Endothelial cell of umbilical vein (primary cell): ENCODE measurements at regions of chr1 and their contacts with region 1.

Region 1: DNA sequence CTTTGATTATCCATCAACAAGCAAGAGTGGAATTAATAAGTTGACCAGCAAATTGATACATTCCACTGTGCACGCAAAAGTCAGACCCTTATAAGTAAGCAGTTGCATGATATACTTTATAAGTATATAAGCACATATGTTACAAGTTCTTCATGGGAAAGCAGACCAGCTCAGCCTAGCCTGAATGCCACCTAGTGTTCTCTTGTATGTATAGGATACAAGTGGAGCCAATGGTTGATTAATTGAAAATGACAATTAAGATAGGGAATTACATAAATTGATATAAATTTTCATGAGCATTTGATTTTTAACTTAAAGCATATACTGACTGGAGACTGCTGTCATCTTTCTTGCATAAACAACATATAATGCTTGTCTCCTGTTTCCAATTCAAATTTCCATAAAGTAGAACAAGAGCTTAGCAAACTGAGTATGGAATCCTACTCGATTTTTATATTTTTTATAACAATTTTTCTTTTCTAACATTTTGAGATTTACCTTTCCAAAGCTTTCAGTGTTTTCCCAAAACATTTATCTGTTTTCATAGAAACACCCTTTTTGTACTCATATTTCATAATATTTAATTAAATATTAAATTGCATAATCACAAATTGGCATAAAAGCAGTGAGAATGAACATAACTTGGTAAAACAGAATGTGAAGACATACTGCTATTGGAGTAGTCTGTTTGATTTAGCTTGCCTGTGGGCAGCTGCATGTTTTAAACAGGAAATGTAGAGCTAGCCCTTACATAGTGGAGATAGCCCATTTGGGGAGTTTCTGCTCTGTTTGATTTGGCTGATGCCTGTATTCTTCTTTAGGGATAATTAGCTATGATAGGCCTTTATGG is 62.8 kb downstream of the MAGI3 start:
- DNase-seq: peak; percentile 60
- H3K4me3 ChIP-seq: no peak overlapping the region
- H3K27ac ChIP-seq: no peak overlapping the region
- H3K4me1 ChIP-seq: peaks cover 30% of the 10 kb centered on the region
- H3K27me3 ChIP-seq: no peaks in the 10 kb centered on the region
- CTCF ChIP-seq: peak; percentile 19 to 44
- POLR2A ChIP-seq: no peak

Region 2: DNA sequence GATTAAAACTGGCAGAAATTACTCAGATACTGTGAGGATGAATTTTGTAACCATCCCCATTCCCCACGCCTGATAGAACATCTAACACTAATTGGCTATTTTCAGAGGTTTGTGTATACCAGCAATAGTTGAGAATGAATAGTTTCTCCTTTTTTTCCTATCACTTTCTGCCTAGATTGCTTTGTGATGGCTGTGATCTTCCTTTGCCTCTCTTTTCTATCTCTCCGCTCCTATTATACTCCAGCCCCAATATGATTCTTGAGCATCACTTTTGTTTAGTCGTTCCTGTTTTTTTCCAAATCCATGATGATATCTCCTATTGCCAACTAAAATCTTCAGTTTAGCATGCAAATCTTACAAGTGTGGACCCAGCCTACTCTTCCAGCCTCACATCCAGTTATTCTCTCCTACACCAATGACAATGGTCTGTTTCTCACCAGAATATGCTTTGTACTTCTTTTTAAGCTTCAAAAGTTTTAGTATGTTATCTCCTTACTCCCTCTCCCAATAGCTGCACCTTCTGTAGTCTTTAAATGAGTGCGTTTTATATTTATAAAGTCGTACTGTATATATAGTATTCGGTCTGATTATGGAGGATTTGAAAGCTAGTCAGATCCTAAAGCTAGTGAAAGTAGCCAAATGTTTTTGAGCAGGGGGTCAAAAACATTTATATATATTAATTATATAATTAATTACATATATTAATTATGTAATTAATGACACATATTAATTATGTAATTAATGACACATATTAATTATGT is 37.7 kb before region 1 on chr1:
- CTCF ChIA-PET with region 1: interaction called, 6 read pairs
- POLR2A ChIA-PET with region 1: no interaction called
- dilution Hi-C with region 1: no loop called
- intact Hi-C with region 1: loop called (anchors 1 kb)
- DNase-seq: no peak
- H3K4me3 ChIP-seq: no peak overlapping the region
- H3K27ac ChIP-seq: no peak overlapping the region
- H3K4me1 ChIP-seq: no peaks in the 10 kb centered on the region
- H3K27me3 ChIP-seq: no peaks in the 10 kb centered on the region
- CTCF ChIP-seq: no peak
- POLR2A ChIP-seq: no peak

Region 3: DNA sequence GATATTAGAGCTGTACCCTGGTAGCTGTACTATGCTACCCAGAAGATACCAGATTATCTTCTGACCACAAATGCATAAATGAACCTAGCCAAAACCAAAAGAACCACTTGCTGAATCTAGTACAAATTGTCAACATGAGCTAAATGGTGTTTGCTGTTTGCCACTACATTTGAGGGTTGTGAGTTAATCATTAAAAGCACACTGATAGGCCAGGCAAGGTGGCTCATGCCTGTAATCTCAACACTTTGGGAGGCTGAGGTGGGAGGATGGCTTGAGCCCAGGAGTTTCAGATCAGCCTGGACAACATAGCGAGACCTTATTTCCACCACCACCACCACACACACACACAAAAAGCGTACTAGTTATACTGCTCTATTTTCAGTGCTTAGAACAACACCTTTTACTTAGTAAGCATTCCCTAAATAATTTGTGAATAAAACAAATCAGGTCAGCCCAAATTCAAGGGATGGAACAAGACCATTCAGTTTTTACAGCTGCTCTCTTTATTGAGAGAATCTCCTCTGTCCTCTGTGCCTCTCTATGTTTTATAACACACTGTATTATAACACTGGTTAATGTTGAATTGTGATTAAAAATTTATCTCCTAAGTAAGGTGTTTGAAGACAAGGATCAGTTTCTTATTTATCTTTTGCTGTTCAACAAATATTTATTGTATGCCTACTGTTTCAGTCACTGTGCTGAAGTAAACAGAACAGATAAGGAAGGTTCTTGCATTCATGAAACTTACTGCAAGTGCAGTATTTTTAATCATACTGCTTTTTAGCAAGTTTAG is 18.9 kb before region 1 on chr1:
- CTCF ChIA-PET with region 1: interaction called, 21 read pairs
- POLR2A ChIA-PET with region 1: no interaction called
- dilution Hi-C with region 1: no loop called
- intact Hi-C with region 1: no loop called
- DNase-seq: no peak
- H3K4me3 ChIP-seq: no peak overlapping the region
- H3K27ac ChIP-seq: no peak overlapping the region
- H3K4me1 ChIP-seq: no peaks in the 10 kb centered on the region
- H3K27me3 ChIP-seq: no peaks in the 10 kb centered on the region
- CTCF ChIP-seq: no peak
- POLR2A ChIP-seq: no peak

Region 4: DNA sequence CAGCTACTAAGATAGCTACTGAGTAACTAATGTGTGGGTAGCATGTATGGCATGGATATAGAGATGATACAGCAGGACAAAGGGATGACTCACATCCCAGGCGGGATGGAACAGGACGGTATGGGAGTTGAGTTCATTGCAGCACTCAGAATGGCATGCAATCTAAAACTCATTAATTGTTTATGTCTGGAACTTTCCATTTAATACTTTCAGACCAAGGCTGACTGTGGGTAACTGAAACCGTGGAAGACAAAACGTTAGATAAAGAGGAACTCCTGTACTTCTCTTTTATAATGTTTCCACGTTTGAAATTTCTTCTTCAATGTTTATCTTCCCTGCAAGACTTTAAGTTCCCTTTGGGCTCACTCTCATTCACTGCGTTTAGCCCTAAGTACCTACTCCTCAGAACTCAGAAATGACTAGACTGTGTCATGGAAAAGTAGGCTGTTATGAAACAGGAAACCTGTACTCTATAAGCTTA is 89.1 kb after region 1 on chr1:
- CTCF ChIA-PET with region 1: no interaction called
- POLR2A ChIA-PET with region 1: no interaction called
- dilution Hi-C with region 1: no loop called
- intact Hi-C with region 1: no loop called
- DNase-seq: peak; percentile 24
- H3K4me3 ChIP-seq: no peak overlapping the region
- H3K27ac ChIP-seq: no peak overlapping the region
- H3K4me1 ChIP-seq: no peaks in the 10 kb centered on the region
- H3K27me3 ChIP-seq: no peaks in the 10 kb centered on the region
- CTCF ChIP-seq: no peak
- POLR2A ChIP-seq: no peak

Region 5: GRCh38 chr1:113887402-113888175 is 434.4 kb after region 1 on chr1 and contains the start of gene BCL2L15:
- CTCF ChIA-PET with region 1: no interaction called
- POLR2A ChIA-PET with region 1: no interaction called
- dilution Hi-C with region 1: no loop called
- intact Hi-C with region 1: no loop called
- DNase-seq: no peak
- H3K4me3 ChIP-seq: no peak within 1 kb of the TSS
- H3K27ac ChIP-seq: no peak within 1 kb of the TSS
- H3K4me1 ChIP-seq: no peaks in the 10 kb centered on the region
- H3K27me3 ChIP-seq: no peaks in the 10 kb centered on the region
- CTCF ChIP-seq: no peak
- POLR2A ChIP-seq: no peak
- total RNA-seq, gene BCL2L15: 0.29 and 1.3 TPM in 2 replicates